ENCODE measurements at regions of chr17 and their contacts with region 1.

Region 1: DNA sequence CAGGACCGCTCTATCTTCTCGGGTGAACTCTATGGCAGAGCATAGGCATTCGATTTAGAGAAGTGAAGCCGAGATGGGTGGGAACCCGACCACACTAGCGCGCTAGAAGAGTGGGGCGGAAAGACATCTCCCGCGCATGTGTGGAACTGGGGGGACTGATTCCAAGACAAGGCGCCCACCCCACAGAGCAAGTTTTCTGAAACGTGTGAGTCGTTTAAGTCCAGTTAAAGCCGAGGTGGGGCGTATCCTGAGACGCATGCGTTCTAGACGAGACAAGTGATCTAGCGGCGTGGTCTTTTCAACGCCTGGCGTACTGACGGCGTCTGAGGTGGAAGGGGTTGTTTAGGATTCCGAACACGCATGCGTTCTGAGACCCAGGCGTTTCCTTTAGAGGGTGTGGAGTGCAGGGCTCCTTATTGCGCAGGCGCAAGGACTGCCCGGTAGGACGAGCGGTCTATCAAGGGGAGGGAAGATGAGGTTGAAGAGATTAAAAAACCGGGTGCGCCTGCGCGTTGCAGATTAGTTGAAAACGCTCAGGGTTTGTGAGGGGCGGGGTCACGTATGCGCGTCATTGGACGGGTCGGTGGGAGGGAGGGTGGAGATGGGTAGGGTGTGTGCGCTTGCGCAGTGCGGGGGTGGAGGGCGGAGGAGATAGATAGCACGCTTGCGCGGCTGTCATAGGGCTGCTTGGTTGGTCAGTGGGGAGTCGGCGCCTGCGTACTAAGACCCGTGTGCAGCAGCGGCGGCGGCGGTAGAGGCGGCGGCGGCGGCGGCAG is at the start of gene EIF5A:
- DNase-seq: peak; percentile 99
- H3K4me3 Mint-ChIP-seq: peak within 1 kb of the TSS; percentile 94
- H3K27ac Mint-ChIP-seq: peak within 1 kb of the TSS; percentile 100
- H3K4me1 Mint-ChIP-seq: peaks cover 24% of the 10 kb centered on the region
- H3K27me3 Mint-ChIP-seq: peaks cover 4% of the 10 kb centered on the region
- total RNA-seq, gene EIF5A: 1,241 and 1,262 TPM in 2 replicates

Region 2: GRCh38 chr17:7035591-7036368 is 271.3 kb before region 1 on chr17 and contains the start of gene SLC16A13:
- intact Hi-C with region 1: loop called (anchors 5 kb)
- DNase-seq: peak; percentile 99
- H3K4me3 Mint-ChIP-seq: peak within 1 kb of the TSS; percentile 95
- H3K27ac Mint-ChIP-seq: peak within 1 kb of the TSS; percentile 93
- H3K4me1 Mint-ChIP-seq: peaks cover 62% of the 10 kb centered on the region
- H3K27me3 Mint-ChIP-seq: no peaks in the 10 kb centered on the region
- total RNA-seq, gene SLC16A13: 14.3 and 14.8 TPM in 2 replicates

Region 3: GRCh38 chr17:7107012-7107754 is 199.9 kb before region 1 on chr17:
- intact Hi-C with region 1: no loop called
- DNase-seq: no peak
- H3K4me3 Mint-ChIP-seq: no peak overlapping the region
- H3K27ac Mint-ChIP-seq: no peak overlapping the region
- H3K4me1 Mint-ChIP-seq: peaks cover 14% of the 10 kb centered on the region
- H3K27me3 Mint-ChIP-seq: peaks cover 9% of the 10 kb centered on the region

Region 4: DNA sequence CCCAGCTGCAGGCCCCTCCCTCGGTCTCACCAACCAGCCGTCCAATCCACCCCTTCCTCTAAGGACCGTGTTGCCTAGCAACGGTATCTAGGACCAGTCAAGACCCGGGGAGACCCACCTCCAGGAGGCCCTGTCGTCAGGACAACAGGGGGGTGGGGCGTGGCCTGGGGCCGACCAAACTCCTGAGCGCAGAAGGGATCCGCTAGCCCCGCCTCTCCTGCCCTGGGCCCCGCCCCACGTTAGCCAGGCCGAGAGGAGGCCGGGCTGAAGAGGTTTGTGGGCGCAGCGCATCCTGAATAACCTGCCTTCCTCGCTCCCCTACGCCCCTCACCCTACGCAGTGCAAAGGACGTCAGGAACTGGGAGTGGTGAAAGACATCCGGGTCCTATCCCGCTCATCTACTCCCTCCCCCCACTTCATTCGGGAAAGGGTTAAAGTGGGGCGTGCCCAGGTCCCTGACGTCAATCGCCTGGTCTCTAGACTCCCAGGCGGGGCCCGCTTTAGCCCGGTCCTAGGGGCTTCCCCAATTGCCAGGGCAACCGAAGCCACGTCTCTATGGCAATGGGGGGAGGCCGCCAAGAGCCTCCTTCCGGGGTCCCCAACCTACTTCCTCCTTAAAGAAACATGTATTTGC is 102.2 kb before region 1 on chr17:
- intact Hi-C with region 1: no loop called
- DNase-seq: peak; percentile 92
- H3K4me3 Mint-ChIP-seq: peak overlapping the region; percentile 85
- H3K27ac Mint-ChIP-seq: peak overlapping the region; percentile 86
- H3K4me1 Mint-ChIP-seq: peaks cover 24% of the 10 kb centered on the region
- H3K27me3 Mint-ChIP-seq: peaks cover 2% of the 10 kb centered on the region

Region 5: GRCh38 chr17:7239091-7240027 is 67.7 kb before region 1 on chr17 and contains the start of gene PHF23:
- intact Hi-C with region 1: loop called (anchors 1 kb)
- DNase-seq: peak; percentile 98
- H3K4me3 Mint-ChIP-seq: peak within 1 kb of the TSS; percentile 97
- H3K27ac Mint-ChIP-seq: peak within 1 kb of the TSS; percentile 94
- H3K4me1 Mint-ChIP-seq: peaks cover 68% of the 10 kb centered on the region
- H3K27me3 Mint-ChIP-seq: no peaks in the 10 kb centered on the region
- total RNA-seq, gene PHF23: 52.5 and 55.4 TPM in 2 replicates

Region 6: GRCh38 chr17:7296189-7296902 is 10.8 kb before region 1 on chr17:
- intact Hi-C with region 1: loop called (anchors 1 kb)
- DNase-seq: peak; percentile 63
- H3K4me3 Mint-ChIP-seq: peak overlapping the region; percentile 22
- H3K27ac Mint-ChIP-seq: no peak overlapping the region
- H3K4me1 Mint-ChIP-seq: peaks cover 16% of the 10 kb centered on the region
- H3K27me3 Mint-ChIP-seq: peaks cover 34% of the 10 kb centered on the region

Region 7: DNA sequence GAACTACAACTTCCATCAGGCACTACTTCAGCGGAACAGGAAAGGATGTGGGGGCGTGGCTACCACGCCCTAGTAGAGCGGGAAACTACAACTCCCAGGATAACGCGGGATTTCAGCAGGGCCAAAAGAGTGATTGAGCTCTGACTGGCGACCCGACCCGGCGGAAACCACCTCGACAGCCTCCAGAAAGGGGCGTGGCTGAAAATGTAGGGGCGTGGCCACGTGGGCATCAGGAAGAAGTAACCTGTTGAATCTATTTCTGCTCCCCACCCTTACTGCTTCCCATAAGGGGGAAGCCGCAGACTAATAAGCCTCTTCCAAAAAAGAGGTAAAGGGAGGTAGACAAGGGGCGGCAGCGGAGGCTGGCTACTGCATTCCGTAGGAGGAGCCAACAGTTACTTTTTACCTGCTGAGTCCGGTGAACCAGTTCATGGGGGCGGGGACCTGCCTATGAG is 128.1 kb after region 1 on chr17 and contains the start of gene TMEM102:
- intact Hi-C with region 1: loop called (anchors 1 kb)
- DNase-seq: peak; percentile 97
- H3K4me3 Mint-ChIP-seq: peak within 1 kb of the TSS; percentile 91
- H3K27ac Mint-ChIP-seq: peak within 1 kb of the TSS; percentile 94
- H3K4me1 Mint-ChIP-seq: peaks cover 38% of the 10 kb centered on the region
- H3K27me3 Mint-ChIP-seq: peaks cover 5% of the 10 kb centered on the region
- total RNA-seq, gene TMEM102: 12.3 and 14.0 TPM in 2 replicates

Region 8: GRCh38 chr17:7548585-7549400 is 241.7 kb after region 1 on chr17 and contains the start of gene TNFSF12:
- intact Hi-C with region 1: no loop called
- DNase-seq: peak; percentile 63
- H3K4me3 Mint-ChIP-seq: peak within 1 kb of the TSS; percentile 87
- H3K27ac Mint-ChIP-seq: peak within 1 kb of the TSS; percentile 83
- H3K4me1 Mint-ChIP-seq: peaks cover 50% of the 10 kb centered on the region
- H3K27me3 Mint-ChIP-seq: no peaks in the 10 kb centered on the region
- total RNA-seq, gene TNFSF12: 18.6 and 26.5 TPM in 2 replicates

Region 9: DNA sequence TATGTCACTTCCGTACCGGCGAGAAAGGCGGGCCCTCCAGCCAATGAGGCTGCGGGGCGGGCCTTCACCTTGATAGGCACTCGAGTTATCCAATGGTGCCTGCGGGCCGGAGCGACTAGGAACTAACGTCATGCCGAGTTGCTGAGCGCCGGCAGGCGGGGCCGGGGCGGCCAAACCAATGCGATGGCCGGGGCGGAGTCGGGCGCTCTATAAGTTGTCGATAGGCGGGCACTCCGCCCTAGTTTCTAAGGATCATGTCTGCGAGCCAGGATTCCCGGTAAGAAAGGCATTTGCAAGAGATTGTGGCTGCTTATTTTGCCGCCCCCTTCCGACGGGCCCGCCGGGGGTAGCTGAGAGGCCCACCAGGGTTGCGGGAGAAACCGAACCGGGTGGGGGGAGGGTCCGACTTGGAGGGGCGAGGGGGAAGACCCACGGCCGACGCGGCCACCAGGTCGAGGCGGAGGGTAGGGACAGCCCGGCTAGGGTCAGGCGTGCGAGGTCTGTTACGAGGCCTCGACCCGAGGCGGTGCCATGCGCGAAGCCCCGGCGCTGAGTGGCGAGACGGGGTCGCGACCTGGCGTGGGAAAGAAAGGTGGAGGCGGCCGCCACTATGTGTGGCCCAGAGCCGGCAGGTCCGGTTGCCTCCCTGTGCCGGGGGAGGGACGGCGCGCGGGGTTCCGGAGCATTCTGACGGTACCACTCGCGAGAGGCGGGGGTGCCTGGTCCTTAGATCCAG is 265.7 kb after region 1 on chr17:
- intact Hi-C with region 1: loop called (anchors 1 kb)
- DNase-seq: peak; percentile 100
- H3K4me3 Mint-ChIP-seq: peak overlapping the region; percentile 94
- H3K27ac Mint-ChIP-seq: peak overlapping the region; percentile 100
- H3K4me1 Mint-ChIP-seq: peaks cover 54% of the 10 kb centered on the region
- H3K27me3 Mint-ChIP-seq: peaks cover 2% of the 10 kb centered on the region

Measured in activated T-helper 1 cell treated with anti-CD3 and anti-CD28 coated beads, Interleukin-12 subunit alpha, Interleukin-12 subunit beta, Interleukin-2, Interleukin-4 antibody, amounts not matched to agents 30 ng/mL and 10 ng/mL and 1 ng/mL, durations not matched to agents 14 hours and 24 hours and 36 hours (primary cell).